Calu3 (cell line): ENCODE measurements at regions of chr1 and their contacts with region 1.

Region 1: DNA sequence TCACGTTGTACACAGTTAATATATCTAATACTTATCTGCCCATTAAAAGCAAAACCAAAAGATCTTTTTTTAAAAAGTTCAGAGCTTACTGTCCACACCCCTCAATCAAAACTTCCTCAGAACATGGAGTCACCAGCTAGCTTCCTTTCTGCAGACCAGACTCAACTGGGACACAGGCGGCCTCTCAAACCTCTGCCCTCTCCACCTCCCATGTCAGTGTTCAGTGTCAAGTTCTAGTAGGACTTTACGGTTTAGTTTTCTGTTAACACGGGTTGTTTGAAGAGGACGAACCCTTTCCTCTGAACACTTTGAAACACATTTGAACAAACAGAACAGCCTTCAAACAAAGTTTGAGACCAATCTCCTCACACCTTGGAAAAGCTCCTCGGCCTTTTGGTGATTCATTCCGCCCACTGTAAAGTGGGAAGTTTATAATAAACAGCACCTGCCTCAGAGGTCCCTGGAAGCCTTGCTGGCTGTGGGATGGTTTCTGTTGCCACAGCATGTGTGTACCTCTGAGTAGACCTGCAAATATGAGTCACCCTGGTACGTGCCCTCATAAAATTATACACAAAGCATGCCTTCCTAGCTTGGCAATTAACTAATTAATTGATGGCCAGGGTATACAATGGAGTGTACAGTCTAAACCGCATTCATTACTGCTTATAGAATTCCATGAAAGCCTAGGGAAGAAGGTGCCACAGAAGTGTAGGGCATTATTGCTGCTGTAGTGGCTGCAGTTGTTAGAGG is 48.4 kb upstream of the SIPA1L2 start:
- DNase-seq: peak; percentile 44
- H3K4me3 Mint-ChIP-seq: no peak overlapping the region
- H3K27ac Mint-ChIP-seq: no peak overlapping the region
- H3K4me1 Mint-ChIP-seq: peaks cover 8% of the 10 kb centered on the region
- H3K27me3 Mint-ChIP-seq: peaks cover 71% of the 10 kb centered on the region
- CTCF ChIP-seq: no peak

Region 2: GRCh38 chr1:232643251-232643650 is 35.1 kb before region 1 on chr1:
- CTCF ChIA-PET with region 1: no interaction called
- intact Hi-C with region 1: loop called (anchors 1 kb)
- DNase-seq: no peak
- H3K4me3 Mint-ChIP-seq: no peak overlapping the region
- H3K27ac Mint-ChIP-seq: no peak overlapping the region
- H3K4me1 Mint-ChIP-seq: no peaks in the 10 kb centered on the region
- H3K27me3 Mint-ChIP-seq: peaks cover 27% of the 10 kb centered on the region
- CTCF ChIP-seq: no peak

Region 3: GRCh38 chr1:232664844-232665777 is 13.2 kb before region 1 on chr1:
- CTCF ChIA-PET with region 1: interaction called, 3 read pairs
- intact Hi-C with region 1: loop called (anchors 2 kb)
- DNase-seq: no peak
- H3K4me3 Mint-ChIP-seq: no peak overlapping the region
- H3K27ac Mint-ChIP-seq: peak overlapping the region; percentile 24
- H3K4me1 Mint-ChIP-seq: peaks cover 11% of the 10 kb centered on the region
- H3K27me3 Mint-ChIP-seq: peaks cover 46% of the 10 kb centered on the region
- CTCF ChIP-seq: no peak

Region 4: GRCh38 chr1:232690285-232690935 is 12.0 kb after region 1 on chr1:
- CTCF ChIA-PET with region 1: interaction called, 11 read pairs
- intact Hi-C with region 1: no loop called
- DNase-seq: no peak
- H3K4me3 Mint-ChIP-seq: no peak overlapping the region
- H3K27ac Mint-ChIP-seq: no peak overlapping the region
- H3K4me1 Mint-ChIP-seq: no peaks in the 10 kb centered on the region
- H3K27me3 Mint-ChIP-seq: peaks cover 86% of the 10 kb centered on the region
- CTCF ChIP-seq: no peak